ENCODE measurements at regions of chr13 and their contacts with region 1.

Region 1: DNA sequence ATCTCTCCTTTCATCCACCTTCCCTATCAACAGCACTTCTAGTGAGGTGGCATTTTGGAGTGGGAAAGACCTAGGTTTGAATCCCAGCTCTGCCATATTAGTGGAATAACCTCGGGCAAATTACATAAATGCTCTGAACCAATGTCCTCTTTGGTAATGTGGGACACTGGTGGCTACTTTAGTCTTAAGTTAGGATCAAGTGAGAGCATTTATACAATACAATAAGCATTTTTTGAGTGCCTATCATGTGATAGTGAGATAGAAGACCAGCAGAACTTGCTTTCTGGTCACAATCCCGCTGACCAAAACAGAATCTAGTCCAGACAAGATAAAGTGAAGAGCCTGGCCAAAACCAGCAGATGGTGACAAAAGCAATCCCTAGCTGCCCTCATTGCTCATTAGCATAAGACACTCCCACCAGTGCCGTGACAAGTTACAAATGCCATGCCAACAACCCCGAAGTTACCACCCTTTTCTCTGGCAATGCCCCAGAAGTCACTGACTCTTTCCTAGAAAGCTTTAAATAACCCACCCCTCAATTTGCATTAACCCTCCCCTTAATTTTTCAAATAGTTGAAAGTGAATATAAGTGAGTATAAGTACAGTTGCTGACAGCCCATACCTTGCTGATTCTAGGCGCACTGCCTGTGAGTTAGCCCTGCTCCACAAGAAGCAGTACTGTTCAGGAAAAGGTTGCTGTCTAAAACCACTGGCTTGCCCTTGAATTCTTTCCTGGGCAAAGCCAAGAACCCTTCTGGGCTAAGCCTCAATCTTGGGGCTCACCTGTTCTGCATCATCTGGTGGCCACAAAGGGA is 28.9 kb upstream of the KPNA3 start:
- DNase-seq: peak; percentile 45
- H3K4me3 Mint-ChIP-seq: no peak overlapping the region
- H3K27ac Mint-ChIP-seq: no peak overlapping the region
- H3K4me1 Mint-ChIP-seq: no peaks in the 10 kb centered on the region
- H3K27me3 Mint-ChIP-seq: no peaks in the 10 kb centered on the region
- CTCF ChIP-seq: no peak

Region 2: GRCh38 chr13:49806126-49806536 is 15.3 kb before region 1 on chr13:
- CTCF ChIA-PET with region 1: interaction called, 13 read pairs
- POLR2A ChIA-PET with region 1: interaction called, 3 read pairs
- intact Hi-C with region 1: no loop called
- DNase-seq: peak; percentile 37
- H3K4me3 Mint-ChIP-seq: no peak overlapping the region
- H3K27ac Mint-ChIP-seq: no peak overlapping the region
- H3K4me1 Mint-ChIP-seq: no peaks in the 10 kb centered on the region
- H3K27me3 Mint-ChIP-seq: no peaks in the 10 kb centered on the region
- CTCF ChIP-seq: no peak

Measured in MCF 10A (cell line).